ENCODE measurements at regions of chr7 and their contacts with region 1.

Region 1: DNA sequence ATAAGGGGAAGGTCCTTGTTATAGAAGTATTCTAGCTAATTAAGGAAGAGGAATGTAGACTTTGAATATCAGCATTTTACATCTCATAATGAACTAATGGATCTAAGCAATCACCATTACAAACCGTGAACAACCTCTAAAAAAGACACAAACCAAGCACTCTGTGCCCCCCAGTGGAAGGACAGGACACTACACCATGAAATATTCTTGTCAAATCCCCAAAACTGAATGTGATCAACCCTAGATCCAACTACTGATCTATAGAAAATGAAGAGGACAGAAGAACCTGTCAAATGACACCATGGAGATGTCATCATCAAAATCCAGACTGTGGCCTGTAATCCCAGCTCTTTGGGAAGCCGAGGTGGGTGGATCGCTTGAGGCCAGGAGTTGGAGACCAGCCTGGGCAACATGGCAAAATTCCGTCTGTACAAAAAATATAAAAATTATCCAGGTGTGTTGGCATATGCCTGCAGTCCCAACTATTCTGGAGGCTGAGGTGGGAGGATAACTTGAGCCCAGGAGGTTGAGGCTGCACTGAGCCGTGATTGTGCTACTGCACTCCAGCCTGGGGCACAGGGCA is 111.3 kb upstream of the CARD11 start:
- DNase-seq: no peak
- H3K4me3 ChIP-seq: no peak overlapping the region
- CTCF ChIP-seq: peak; percentile 46

Region 2: GRCh38 chr7:2886900-2887299 is 268.1 kb before region 1 on chr7:
- CTCF ChIA-PET with region 1: interaction called, 21 read pairs
- POLR2A ChIA-PET with region 1: no interaction called
- DNase-seq: no peak
- H3K4me3 ChIP-seq: no peak overlapping the region
- CTCF ChIP-seq: peak; percentile 85

Region 3: GRCh38 chr7:3078514-3078913 is 76.5 kb before region 1 on chr7:
- CTCF ChIA-PET with region 1: no interaction called
- POLR2A ChIA-PET with region 1: no interaction called
- DNase-seq: no peak
- H3K4me3 ChIP-seq: no peak overlapping the region
- CTCF ChIP-seq: no peak

Region 4: DNA sequence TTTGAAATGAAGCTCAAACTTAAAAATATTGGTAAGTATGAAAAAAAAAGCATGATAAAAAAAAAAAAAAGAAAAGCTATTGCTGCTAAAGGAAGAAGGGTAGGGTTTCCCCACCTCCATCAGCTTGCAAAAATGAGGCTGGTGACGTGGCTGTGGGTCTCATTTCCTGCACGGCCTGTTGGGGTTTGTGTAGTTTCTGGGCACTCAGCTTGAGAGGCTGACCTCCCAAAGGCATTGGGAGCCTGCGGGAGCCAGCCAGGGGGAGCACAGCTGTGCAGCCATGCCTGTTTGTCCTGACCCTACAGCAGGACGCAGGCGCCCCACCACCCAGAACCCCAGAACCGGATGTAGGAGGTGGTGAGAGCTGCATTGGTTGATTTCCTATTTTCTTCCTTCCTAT is 62.5 kb before region 1 on chr7:
- CTCF ChIA-PET with region 1: no interaction called
- POLR2A ChIA-PET with region 1: no interaction called
- DNase-seq: no peak
- H3K4me3 ChIP-seq: no peak overlapping the region
- CTCF ChIP-seq: no peak

Measured in AG04449 (cell line).